ENCODE measurements at regions of chr5 and their contacts with region 1.

Region 1: DNA sequence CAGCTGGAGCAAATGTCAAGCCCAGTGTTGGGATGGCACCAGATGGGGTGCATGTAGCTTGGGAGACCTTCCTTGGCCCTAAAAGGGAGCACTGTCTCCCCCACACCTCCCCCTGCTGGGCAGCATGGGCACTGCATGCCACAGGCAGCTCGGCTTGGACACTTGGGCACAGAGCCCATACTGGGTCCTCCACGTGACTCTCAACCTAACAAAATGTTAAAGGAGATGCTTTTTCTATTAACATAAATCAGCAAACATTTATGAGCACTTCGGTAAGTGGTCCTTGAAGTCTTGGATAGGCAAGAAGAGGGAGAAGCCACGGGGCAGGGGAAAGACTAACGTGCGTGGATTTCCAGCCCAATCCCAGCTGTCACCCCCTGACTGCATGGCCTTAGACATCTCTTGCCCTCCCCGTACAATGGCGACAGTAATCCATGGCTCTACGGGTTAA is 23.9 kb upstream of the MAPK9 start:
- DNase-seq: peak; percentile 67 to 81
- H3K4me3 ChIP-seq: no peak overlapping the region
- H3K4me3 Mint-ChIP-seq: no peak overlapping the region
- H3K27ac Mint-ChIP-seq: no peak overlapping the region
- H3K4me1 ChIP-seq: no peaks in the 10 kb centered on the region
- H3K4me1 Mint-ChIP-seq: peaks cover 7% of the 10 kb centered on the region
- H3K27me3 ChIP-seq: no peaks in the 10 kb centered on the region
- H3K27me3 Mint-ChIP-seq: peaks cover 2% of the 10 kb centered on the region
- CTCF ChIP-seq: peak; percentile 85 to 92

Region 2: GRCh38 chr5:180126726-180127681 is 188.8 kb before region 1 on chr5:
- CTCF ChIA-PET with region 1: no interaction called
- POLR2A ChIA-PET with region 1: interaction called, 3 read pairs
- intact Hi-C with region 1: loop called (anchors 5 kb)
- DNase-seq: peak; percentile 41 to 73
- H3K4me3 ChIP-seq: no peak overlapping the region
- H3K4me3 Mint-ChIP-seq: peak overlapping the region; percentile 7
- H3K27ac Mint-ChIP-seq: no peak overlapping the region
- H3K4me1 ChIP-seq: 0 out of 2 replicates have a peak, but pooled peaks cover 4% of the 10 kb centered on the region
- H3K4me1 Mint-ChIP-seq: peaks cover 20% of the 10 kb centered on the region
- H3K27me3 ChIP-seq: no peaks in the 10 kb centered on the region
- H3K27me3 Mint-ChIP-seq: peaks cover 25% of the 10 kb centered on the region
- CTCF ChIP-seq: peak; percentile 89 to 91

Region 3: GRCh38 chr5:180201051-180201987 is 114.5 kb before region 1 on chr5:
- CTCF ChIA-PET with region 1: interaction called, 4 read pairs
- POLR2A ChIA-PET with region 1: no interaction called
- intact Hi-C with region 1: loop called (anchors 1 kb)
- DNase-seq: peak in 1 of 2 experiments; percentile 37
- H3K4me3 ChIP-seq: no peak overlapping the region
- H3K4me3 Mint-ChIP-seq: no peak overlapping the region
- H3K27ac Mint-ChIP-seq: no peak overlapping the region
- H3K4me1 ChIP-seq: no peaks in the 10 kb centered on the region
- H3K4me1 Mint-ChIP-seq: no peaks in the 10 kb centered on the region
- H3K27me3 ChIP-seq: no peaks in the 10 kb centered on the region
- H3K27me3 Mint-ChIP-seq: no peaks in the 10 kb centered on the region
- CTCF ChIP-seq: peak; percentile 31 to 39

Region 4: DNA sequence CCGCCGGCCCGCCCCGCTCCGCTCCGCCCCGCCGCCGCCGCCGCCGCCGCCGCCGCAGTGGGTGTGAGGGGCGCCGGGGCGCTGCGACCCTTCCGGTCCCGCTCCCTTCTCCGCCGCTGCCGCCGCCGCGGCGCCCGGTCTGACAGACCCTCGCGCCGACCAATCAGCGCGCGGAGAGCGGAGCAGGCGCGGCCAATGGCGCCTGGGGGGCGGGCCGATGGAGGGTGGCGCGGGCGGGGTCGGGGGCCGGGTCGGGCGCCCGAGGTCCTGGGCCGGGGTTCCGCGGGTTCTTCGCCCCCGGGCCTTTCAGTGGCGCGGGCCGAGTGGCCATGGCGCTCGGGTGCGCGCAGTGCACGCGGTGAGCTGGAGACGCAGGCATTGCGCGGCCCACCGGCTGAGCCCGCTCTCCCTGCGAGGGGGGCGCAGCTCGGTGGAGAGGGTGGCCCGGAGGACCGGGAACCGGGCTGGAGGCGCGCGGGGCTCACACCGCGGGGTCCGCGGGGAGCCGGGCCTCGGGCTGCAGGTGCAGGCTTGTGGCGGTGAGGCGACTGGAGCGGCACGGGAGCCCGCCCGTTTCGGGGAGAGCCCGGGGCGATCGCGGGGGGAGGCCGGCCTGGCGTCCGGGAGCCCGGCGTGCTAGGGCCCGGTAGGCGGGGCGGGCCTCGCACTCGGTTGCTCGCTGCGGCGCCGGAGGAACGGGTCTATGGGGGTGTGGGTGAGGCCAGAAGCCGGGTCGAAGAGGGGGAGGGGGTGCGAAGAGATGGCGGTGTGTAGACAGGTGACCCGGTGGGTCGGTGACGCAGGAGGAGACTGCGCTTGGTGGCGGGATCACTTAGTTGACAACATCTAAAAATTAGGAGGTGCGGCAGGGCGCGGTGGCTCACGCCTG is 23.6 kb before region 1 on chr5 and contains the start of gene MAPK9:
- CTCF ChIA-PET with region 1: interaction called, 17 read pairs
- POLR2A ChIA-PET with region 1: interaction called, 5 read pairs
- intact Hi-C with region 1: loop called (anchors 1 kb)
- DNase-seq: peak; percentile 82 to 91
- H3K4me3 ChIP-seq: peak within 1 kb of the TSS; percentile 86
- H3K4me3 Mint-ChIP-seq: peak within 1 kb of the TSS; percentile 94
- H3K27ac Mint-ChIP-seq: peak within 1 kb of the TSS; percentile 91
- H3K4me1 ChIP-seq: peaks cover 39% of the 10 kb centered on the region
- H3K4me1 Mint-ChIP-seq: peaks cover 44% of the 10 kb centered on the region
- H3K27me3 ChIP-seq: no peaks in the 10 kb centered on the region
- H3K27me3 Mint-ChIP-seq: no peaks in the 10 kb centered on the region
- CTCF ChIP-seq: no peak
- total RNA-seq, gene MAPK9: 76.5 and 93.1 TPM in 2 replicates

Region 5: GRCh38 chr5:180304431-180305375 is 11.1 kb before region 1 on chr5:
- CTCF ChIA-PET with region 1: interaction called, 10 read pairs
- POLR2A ChIA-PET with region 1: interaction called, 3 read pairs
- intact Hi-C with region 1: no loop called
- DNase-seq: no peak
- H3K4me3 ChIP-seq: no peak overlapping the region
- H3K4me3 Mint-ChIP-seq: no peak overlapping the region
- H3K27ac Mint-ChIP-seq: no peak overlapping the region
- H3K4me1 ChIP-seq: no peaks in the 10 kb centered on the region
- H3K4me1 Mint-ChIP-seq: no peaks in the 10 kb centered on the region
- H3K27me3 ChIP-seq: no peaks in the 10 kb centered on the region
- H3K27me3 Mint-ChIP-seq: no peaks in the 10 kb centered on the region
- CTCF ChIP-seq: no peak

Region 6: DNA sequence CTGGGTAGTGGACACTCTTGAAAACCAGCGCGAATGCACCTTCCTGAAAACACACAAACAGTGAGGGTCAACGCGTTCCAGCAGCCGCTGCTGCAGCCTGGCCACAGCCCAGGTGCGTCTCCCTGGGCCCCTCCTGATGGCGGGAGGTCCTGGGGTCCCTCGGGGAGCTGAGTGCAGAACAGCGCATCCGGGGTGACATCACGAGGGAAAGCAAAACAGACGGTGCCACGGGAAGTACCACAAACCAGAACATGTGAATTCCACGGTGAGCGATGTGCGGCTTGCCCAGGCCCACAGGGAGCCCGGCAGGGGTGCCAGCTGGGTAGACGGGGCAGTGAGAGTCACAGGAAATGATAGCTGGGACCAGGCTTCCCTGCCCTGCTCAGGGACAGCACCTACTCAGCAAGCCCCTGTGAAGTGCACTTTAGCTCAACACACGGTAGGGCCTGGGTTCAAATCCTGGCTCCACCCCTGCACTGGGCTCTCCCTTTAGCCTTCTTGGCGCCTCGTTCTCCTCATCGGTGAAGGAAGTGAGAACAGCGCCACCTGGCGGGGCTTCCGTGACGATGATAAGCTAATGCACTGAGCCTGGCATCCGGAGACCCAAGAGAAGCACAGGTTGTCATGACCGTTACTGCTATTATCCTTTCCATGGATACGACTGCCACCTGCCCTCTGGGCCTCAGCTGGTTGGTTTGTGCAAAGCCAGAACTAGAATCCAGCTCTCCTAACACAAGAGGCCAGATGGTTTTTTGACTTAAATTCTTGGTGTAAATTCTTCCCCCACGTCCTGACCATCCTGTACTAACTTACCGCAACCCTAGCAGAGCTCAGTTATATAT is 12.7 kb after region 1 on chr5:
- CTCF ChIA-PET with region 1: interaction called, 19 read pairs
- POLR2A ChIA-PET with region 1: interaction called, 5 read pairs
- intact Hi-C with region 1: no loop called
- DNase-seq: peak; percentile 82 to 84
- H3K4me3 ChIP-seq: no peak overlapping the region
- H3K4me3 Mint-ChIP-seq: no peak overlapping the region
- H3K27ac Mint-ChIP-seq: no peak overlapping the region
- H3K4me1 ChIP-seq: no peaks in the 10 kb centered on the region
- H3K4me1 Mint-ChIP-seq: no peaks in the 10 kb centered on the region
- H3K27me3 ChIP-seq: no peaks in the 10 kb centered on the region
- H3K27me3 Mint-ChIP-seq: peaks cover 3% of the 10 kb centered on the region
- CTCF ChIP-seq: peak; percentile 82 to 91

Region 7: GRCh38 chr5:180908998-180909731 is 593.4 kb after region 1 on chr5:
- CTCF ChIA-PET with region 1: no interaction called
- POLR2A ChIA-PET with region 1: no interaction called
- intact Hi-C with region 1: no loop called
- DNase-seq: no peak
- H3K4me3 ChIP-seq: no peak overlapping the region
- H3K4me3 Mint-ChIP-seq: no peak overlapping the region
- H3K27ac Mint-ChIP-seq: no peak overlapping the region
- H3K4me1 ChIP-seq: no peaks in the 10 kb centered on the region
- H3K4me1 Mint-ChIP-seq: no peaks in the 10 kb centered on the region
- H3K27me3 ChIP-seq: no peaks in the 10 kb centered on the region
- H3K27me3 Mint-ChIP-seq: no peaks in the 10 kb centered on the region
- CTCF ChIP-seq: no peak